Activated T-helper 2 cell treated with anti-CD3 and anti-CD28 coated beads, Interferon-gamma antibody, Interleukin-2, Interleukin-4, amounts not matched to agents 10 μg/mL and 5 μg/mL and 100 μg/mL, durations not matched to agents 14 hours and 24 hours and 36 hours (primary cell): ENCODE measurements at regions of chr2 and their contacts with region 1.

Region 1: DNA sequence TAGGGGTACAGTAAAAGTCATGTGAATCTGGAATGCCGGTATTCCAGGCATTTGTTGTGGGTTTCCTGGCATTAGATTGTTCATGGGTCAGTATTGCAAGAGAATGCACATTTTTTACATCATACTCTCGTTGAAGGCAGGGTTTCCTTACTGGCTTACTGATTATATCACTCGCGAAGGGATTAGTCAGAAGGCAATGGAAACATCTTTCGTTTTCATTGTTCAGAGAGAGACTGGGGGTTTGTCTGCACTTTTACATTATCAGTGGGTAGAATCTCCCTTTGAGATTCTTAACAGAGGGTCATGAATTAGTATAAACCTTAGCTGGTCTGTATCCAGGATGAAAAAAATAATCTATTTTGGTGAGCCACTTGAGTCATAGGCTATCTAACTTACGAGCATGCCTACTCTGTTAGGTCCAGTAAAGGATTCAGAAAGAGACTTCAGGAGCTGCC is 229.3 kb upstream of the EPAS1 start:
- DNase-seq: no peak
- H3K4me3 Mint-ChIP-seq: peak overlapping the region; percentile 6
- H3K27ac Mint-ChIP-seq: peak overlapping the region; percentile 65
- H3K4me1 Mint-ChIP-seq: peaks cover 47% of the 10 kb centered on the region
- H3K27me3 Mint-ChIP-seq: no peaks in the 10 kb centered on the region

Region 2: GRCh38 chr2:45993476-45993991 is 74.3 kb before region 1 on chr2:
- intact Hi-C with region 1: no loop called
- DNase-seq: peak; percentile 44
- H3K4me3 Mint-ChIP-seq: no peak overlapping the region
- H3K27ac Mint-ChIP-seq: no peak overlapping the region
- H3K4me1 Mint-ChIP-seq: peaks cover 2% of the 10 kb centered on the region
- H3K27me3 Mint-ChIP-seq: peaks cover 6% of the 10 kb centered on the region

Region 3: DNA sequence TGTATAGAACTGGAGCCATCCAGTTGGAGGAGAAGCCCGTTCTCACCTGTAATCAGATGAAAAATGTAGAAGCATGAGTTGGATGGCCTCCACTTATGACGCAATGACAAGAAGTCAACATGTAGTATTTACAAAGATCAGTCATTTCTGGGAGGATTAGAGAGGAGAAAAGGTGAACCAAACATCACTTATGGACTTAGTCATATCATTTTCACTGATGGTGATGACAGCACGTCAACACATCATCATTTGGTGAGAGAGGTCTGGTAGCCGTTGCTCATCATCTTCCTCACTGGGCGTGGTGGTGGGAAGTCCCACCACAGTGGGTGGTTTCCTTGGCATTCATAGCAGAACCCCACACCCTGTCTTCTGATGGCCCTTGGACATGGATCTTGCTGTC is 34.9 kb before region 1 on chr2:
- intact Hi-C with region 1: loop called (anchors 1 kb)
- DNase-seq: peak; percentile 23
- H3K4me3 Mint-ChIP-seq: no peak overlapping the region
- H3K27ac Mint-ChIP-seq: peak overlapping the region; percentile 84
- H3K4me1 Mint-ChIP-seq: peaks cover 29% of the 10 kb centered on the region
- H3K27me3 Mint-ChIP-seq: no peaks in the 10 kb centered on the region

Region 4: DNA sequence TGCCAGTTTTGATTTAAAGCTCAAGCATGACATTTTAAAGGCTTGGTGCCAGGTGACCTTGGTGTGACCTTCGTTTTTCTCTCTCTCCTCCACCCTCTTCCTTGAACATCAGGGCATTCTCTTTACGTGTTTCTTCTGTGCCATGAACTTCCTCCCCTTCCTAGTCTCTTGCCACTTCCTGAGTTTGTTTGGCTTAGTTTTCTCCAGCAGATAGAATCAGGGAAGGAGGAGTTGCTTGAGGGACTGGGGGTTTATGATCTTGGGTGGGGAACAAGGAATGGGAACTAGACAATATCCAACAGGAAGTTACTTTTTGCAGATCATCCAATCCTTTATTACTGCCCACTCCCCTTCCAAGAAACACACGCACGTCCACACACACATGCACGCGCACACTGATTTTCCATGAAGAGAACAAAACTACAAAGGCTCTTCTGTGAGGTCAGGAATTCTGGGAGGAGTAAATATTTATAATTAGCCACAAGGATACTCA is 18.7 kb after region 1 on chr2:
- intact Hi-C with region 1: no loop called
- DNase-seq: no peak
- H3K4me3 Mint-ChIP-seq: no peak overlapping the region
- H3K27ac Mint-ChIP-seq: no peak overlapping the region
- H3K4me1 Mint-ChIP-seq: peaks cover 15% of the 10 kb centered on the region
- H3K27me3 Mint-ChIP-seq: no peaks in the 10 kb centered on the region

Region 5: DNA sequence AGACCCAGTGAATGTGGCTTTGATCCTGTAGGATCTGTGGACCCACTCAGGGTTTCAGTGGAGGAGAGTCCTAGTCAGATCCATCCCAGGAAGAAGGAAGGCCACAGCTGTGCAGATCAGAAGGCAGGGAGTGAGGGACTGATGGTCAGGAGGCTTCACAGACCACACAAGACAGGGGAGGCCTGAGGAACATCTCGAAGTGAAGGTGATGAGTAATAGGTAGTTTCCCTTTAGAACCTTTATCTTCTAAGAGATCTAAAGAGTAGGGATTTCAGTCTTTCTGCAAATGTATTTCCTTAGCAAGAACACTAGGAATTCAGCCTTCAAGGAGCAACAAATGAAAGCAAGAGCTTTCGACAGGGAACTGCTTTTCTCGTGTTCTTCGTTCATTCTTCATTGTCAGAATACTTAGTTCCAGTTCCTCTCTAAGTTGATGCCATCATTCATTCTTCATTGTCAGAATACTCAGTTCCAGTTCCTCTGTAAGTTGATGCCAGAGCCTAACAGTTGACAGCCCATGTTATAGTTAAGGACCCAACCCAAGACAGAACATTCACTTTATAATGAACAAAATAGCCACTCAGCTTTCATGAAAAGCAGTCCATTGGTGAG is 79.1 kb after region 1 on chr2:
- intact Hi-C with region 1: loop called (anchors 1 kb)
- DNase-seq: no peak
- H3K4me3 Mint-ChIP-seq: no peak overlapping the region
- H3K27ac Mint-ChIP-seq: no peak overlapping the region
- H3K4me1 Mint-ChIP-seq: peaks cover 41% of the 10 kb centered on the region
- H3K27me3 Mint-ChIP-seq: no peaks in the 10 kb centered on the region

Region 6: GRCh38 chr2:46239847-46240181 is 171.9 kb after region 1 on chr2:
- intact Hi-C with region 1: loop called (anchors 1 kb)
- DNase-seq: peak; percentile 63
- H3K4me3 Mint-ChIP-seq: peak overlapping the region; percentile 62
- H3K27ac Mint-ChIP-seq: peak overlapping the region; percentile 88
- H3K4me1 Mint-ChIP-seq: peaks cover 51% of the 10 kb centered on the region
- H3K27me3 Mint-ChIP-seq: no peaks in the 10 kb centered on the region